Activated naive CD4-positive, alpha-beta T cell treated with anti-CD3 and anti-CD28 coated beads for 36 hours (primary cell): ENCODE measurements at regions of chr15 and their contacts with region 1.

Region 1: DNA sequence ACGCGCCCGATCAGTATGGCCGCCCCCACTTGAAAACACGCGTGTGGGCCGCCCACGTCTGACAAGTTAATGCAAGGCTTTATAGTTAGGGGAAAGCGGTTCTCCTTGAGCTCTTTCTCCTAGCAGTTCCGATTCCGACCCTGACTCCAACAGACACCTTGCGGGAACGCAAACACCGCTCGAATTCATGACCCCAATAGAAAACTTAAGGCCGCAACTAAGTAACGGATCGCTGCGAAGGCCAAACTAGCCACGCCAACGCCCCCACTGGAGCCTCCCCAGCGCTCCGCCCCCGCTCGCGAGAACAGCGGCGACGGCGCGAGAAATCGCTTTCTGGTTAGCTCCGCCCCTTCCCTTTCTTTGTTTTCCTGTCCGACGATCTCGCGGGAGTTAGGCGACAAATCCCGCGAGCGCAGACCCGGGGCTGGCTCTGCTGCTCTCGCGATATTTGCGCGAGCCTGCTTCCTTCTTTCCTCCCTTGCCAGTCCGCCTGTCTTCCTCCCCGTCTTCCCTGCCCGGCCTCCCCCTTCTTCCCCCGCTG is at the start of gene IREB2:
- DNase-seq: peak; percentile 98
- H3K4me3 Mint-ChIP-seq: peak within 1 kb of the TSS; percentile 98
- H3K27ac Mint-ChIP-seq: peak within 1 kb of the TSS; percentile 98
- H3K4me1 Mint-ChIP-seq: peaks cover 41% of the 10 kb centered on the region
- H3K27me3 Mint-ChIP-seq: no peaks in the 10 kb centered on the region
- total RNA-seq, gene IREB2: 47.6 to 51.7 TPM

Region 2: GRCh38 chr15:78093242-78094020 is 344.4 kb before region 1 on chr15:
- CTCF ChIA-PET with region 1: no interaction called
- intact Hi-C with region 1: no loop called
- DNase-seq: no peak
- H3K4me3 Mint-ChIP-seq: no peak overlapping the region
- H3K27ac Mint-ChIP-seq: no peak overlapping the region
- H3K4me1 Mint-ChIP-seq: peaks cover 3% of the 10 kb centered on the region
- H3K27me3 Mint-ChIP-seq: no peaks in the 10 kb centered on the region

Region 3: DNA sequence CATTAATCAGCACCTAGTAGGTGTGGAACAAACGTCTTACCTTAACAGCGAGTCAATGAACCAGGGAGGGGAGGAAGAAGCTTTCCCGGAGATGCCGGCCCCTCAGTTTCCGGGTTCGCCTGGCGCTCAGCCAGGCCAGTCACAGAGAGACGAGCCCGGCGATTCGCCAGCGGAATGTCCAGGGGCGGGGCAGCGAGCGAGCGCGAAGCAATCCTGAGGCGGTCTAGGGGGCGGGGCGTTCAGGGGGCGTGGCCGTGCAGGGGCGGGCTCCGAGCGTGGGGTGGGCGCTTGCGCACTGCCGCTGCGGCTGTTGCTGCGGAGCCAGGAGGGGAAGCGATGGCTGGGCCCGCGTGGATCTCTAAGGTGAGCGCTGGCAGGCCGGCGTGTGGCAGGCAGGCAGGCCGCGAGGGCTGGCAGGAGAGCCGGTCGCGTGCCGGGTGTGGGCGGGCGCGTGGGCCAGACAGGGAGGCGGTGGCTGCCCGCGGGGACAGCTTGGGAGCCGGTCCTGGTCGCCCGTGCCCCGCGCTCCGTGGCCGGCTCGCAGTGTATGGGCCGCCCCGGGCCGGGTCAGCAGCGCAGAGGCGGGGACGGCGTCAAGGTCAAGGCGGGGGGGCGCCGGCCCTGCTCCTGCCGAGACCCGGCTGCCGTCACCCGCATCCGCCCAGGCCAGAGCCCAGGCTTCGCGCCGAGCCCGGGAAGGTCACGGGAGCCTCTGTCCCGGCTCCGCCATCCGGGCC is 288.6 kb before region 1 on chr15 and contains the start of gene IDH3A:
- CTCF ChIA-PET with region 1: no interaction called
- intact Hi-C with region 1: loop called (anchors 1 kb)
- DNase-seq: peak; percentile 100
- H3K4me3 Mint-ChIP-seq: peak within 1 kb of the TSS; percentile 89
- H3K27ac Mint-ChIP-seq: peak within 1 kb of the TSS; percentile 89
- H3K4me1 Mint-ChIP-seq: peaks cover 41% of the 10 kb centered on the region
- H3K27me3 Mint-ChIP-seq: no peaks in the 10 kb centered on the region
- total RNA-seq, gene IDH3A: 117 to 123 TPM

Region 4: GRCh38 chr15:78422571-78423340 is 15.1 kb before region 1 on chr15:
- CTCF ChIA-PET with region 1: interaction called, 6 read pairs
- intact Hi-C with region 1: loop called (anchors 2 kb)
- DNase-seq: peak; percentile 76
- H3K4me3 Mint-ChIP-seq: no peak overlapping the region
- H3K27ac Mint-ChIP-seq: no peak overlapping the region
- H3K4me1 Mint-ChIP-seq: peaks cover 14% of the 10 kb centered on the region
- H3K27me3 Mint-ChIP-seq: peaks cover 8% of the 10 kb centered on the region

Region 5: GRCh38 chr15:78540141-78540928 is 102.5 kb after region 1 on chr15 and contains the start of gene PSMA4:
- CTCF ChIA-PET with region 1: interaction called, 4 read pairs
- intact Hi-C with region 1: loop called (anchors 1 kb)
- DNase-seq: peak; percentile 94
- H3K4me3 Mint-ChIP-seq: peak within 1 kb of the TSS; percentile 84
- H3K27ac Mint-ChIP-seq: peak within 1 kb of the TSS; percentile 90
- H3K4me1 Mint-ChIP-seq: peaks cover 23% of the 10 kb centered on the region
- H3K27me3 Mint-ChIP-seq: no peaks in the 10 kb centered on the region
- total RNA-seq, gene PSMA4: 306 to 310 TPM

Region 6: GRCh38 chr15:78761891-78762385 is 324.1 kb after region 1 on chr15:
- CTCF ChIA-PET with region 1: no interaction called
- intact Hi-C with region 1: loop called (anchors 5 kb)
- DNase-seq: no peak
- H3K4me3 Mint-ChIP-seq: peak overlapping the region; percentile 54
- H3K27ac Mint-ChIP-seq: peak overlapping the region; percentile 89
- H3K4me1 Mint-ChIP-seq: peaks cover 24% of the 10 kb centered on the region
- H3K27me3 Mint-ChIP-seq: no peaks in the 10 kb centered on the region